H1 (cell line): ENCODE measurements at regions of chr16 and their contacts with region 1.

Region 1: GRCh38 chr16:23556881-23557778 is at the starts of genes EARS2 and UBFD1:
- DNase-seq: peak; percentile 96 to 100
- H3K4me3 ChIP-seq: peak within 1 kb of the TSS; percentile 44 to 90 (median 82)
- H3K27ac ChIP-seq: peak within 1 kb of the TSS; percentile 93
- H3K4me1 ChIP-seq: no peaks in the 10 kb centered on the region; a peak in 1 of 7 replicates
- H3K27me3 ChIP-seq: no peaks in the 10 kb centered on the region
- CTCF ChIP-seq: peak; percentile 51 to 72 (median 64)
- EP300 ChIP-seq: 0 out of 3 replicates have a peak, but pooled peaks of 1 of the 2 experiments have one; percentile 11
- POLR2A ChIP-seq: peak; percentile 70 to 89
- RAD21 ChIP-seq: peak in 1 of 2 experiments; percentile 0; a peak in 1 of 4 replicates
- total RNA-seq, gene EARS2: 47.8 and 49.1 TPM in 2 replicates
- total RNA-seq, gene UBFD1: 104 and 106 TPM in 2 replicates

Region 2: DNA sequence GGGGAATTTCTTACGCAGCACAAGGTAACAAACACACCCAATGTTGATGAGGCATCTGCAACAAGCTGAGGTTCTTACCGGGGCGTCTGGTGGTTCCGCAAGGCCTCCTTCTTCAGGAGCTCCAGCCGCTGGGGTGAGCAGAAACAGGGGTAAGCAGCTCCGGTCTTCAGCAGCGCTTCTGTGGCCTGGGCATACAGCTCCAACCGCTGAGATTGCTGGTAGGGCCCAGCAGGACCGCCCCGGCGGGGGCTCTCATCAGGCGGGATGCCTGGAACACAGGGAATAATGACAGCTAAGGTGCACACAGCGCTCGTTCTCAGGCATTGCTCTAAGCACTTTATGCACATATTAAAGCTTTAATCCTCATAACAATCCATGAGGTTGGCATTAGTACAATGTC is 12.7 kb before region 1 on chr16:
- CTCF ChIA-PET with region 1: interaction called, 8 read pairs
- POLR2A ChIA-PET with region 1: interaction called, 12 read pairs
- DNase-seq: no peak
- H3K4me3 ChIP-seq: no peak overlapping the region
- H3K27ac ChIP-seq: no peak overlapping the region
- H3K4me1 ChIP-seq: no peaks in the 10 kb centered on the region
- H3K27me3 ChIP-seq: no peaks in the 10 kb centered on the region
- CTCF ChIP-seq: no peak
- EP300 ChIP-seq: no peak
- POLR2A ChIP-seq: no peak
- RAD21 ChIP-seq: no peak

Region 3: GRCh38 chr16:23570992-23571632 is 14.0 kb after region 1 on chr16:
- CTCF ChIA-PET with region 1: interaction called, 6 read pairs
- POLR2A ChIA-PET with region 1: interaction called, 38 read pairs
- DNase-seq: no peak
- H3K4me3 ChIP-seq: no peak overlapping the region
- H3K27ac ChIP-seq: no peak overlapping the region; the same call in 1 of the 2 replicates
- H3K4me1 ChIP-seq: no peaks in the 10 kb centered on the region
- H3K27me3 ChIP-seq: no peaks in the 10 kb centered on the region
- CTCF ChIP-seq: no peak
- EP300 ChIP-seq: no peak
- POLR2A ChIP-seq: no peak
- RAD21 ChIP-seq: no peak

Region 4: GRCh38 chr16:23595951-23596720 is 39.0 kb after region 1 on chr16 and contains the start of gene NDUFAB1:
- CTCF ChIA-PET with region 1: interaction called, 17 read pairs
- POLR2A ChIA-PET with region 1: interaction called, 19 read pairs
- DNase-seq: peak; percentile 43 to 96
- H3K4me3 ChIP-seq: peak within 1 kb of the TSS; percentile 86 to 99 (median 99)
- H3K27ac ChIP-seq: peak within 1 kb of the TSS; percentile 65
- H3K4me1 ChIP-seq: peaks cover 2 to 9% (median 4%) of the 10 kb centered on the region in 4 experiments; a peak in 4 of 7 replicates
- H3K27me3 ChIP-seq: no peaks in the 10 kb centered on the region
- CTCF ChIP-seq: peak; percentile 87 to 98 (median 92)
- EP300 ChIP-seq: peak in 1 of 2 experiments; percentile 72; a peak in 1 of 3 replicates
- POLR2A ChIP-seq: peak in 1 of 2 experiments; percentile 72; a peak in 1 of 3 replicates
- RAD21 ChIP-seq: peak; percentile 27 to 44; a peak in 2 of 4 replicates
- total RNA-seq, gene NDUFAB1: 135 and 145 TPM in 2 replicates

Region 5: GRCh38 chr16:23629516-23629915 is 72.4 kb after region 1 on chr16:
- CTCF ChIA-PET with region 1: no interaction called
- POLR2A ChIA-PET with region 1: no interaction called
- DNase-seq: no peak
- H3K4me3 ChIP-seq: no peak overlapping the region
- H3K27ac ChIP-seq: no peak overlapping the region
- H3K4me1 ChIP-seq: no peaks in the 10 kb centered on the region
- H3K27me3 ChIP-seq: no peaks in the 10 kb centered on the region
- CTCF ChIP-seq: no peak
- EP300 ChIP-seq: no peak
- POLR2A ChIP-seq: no peak
- RAD21 ChIP-seq: no peak